Caco-2 (cell line): ENCODE measurements at regions of chrX and their contacts with region 1.

Region 1: GRCh38 chrX:111869639-111870034 is 6.3 kb upstream of the TRPC5OS start:
- DNase-seq: peak; percentile 34 to 36
- H3K4me3 ChIP-seq: no peak overlapping the region
- H3K4me3 Mint-ChIP-seq: no peak overlapping the region
- H3K27ac Mint-ChIP-seq: no peak overlapping the region
- H3K4me1 ChIP-seq: no peaks in the 10 kb centered on the region
- H3K4me1 Mint-ChIP-seq: no peaks in the 10 kb centered on the region
- H3K27me3 ChIP-seq: no peaks in the 10 kb centered on the region
- H3K27me3 Mint-ChIP-seq: no peaks in the 10 kb centered on the region
- CTCF ChIP-seq: peak; percentile 36 to 49

Region 2: GRCh38 chrX:111680988-111681779 is 188.5 kb before region 1 on chrX and contains the start of gene ALG13:
- CTCF ChIA-PET with region 1: no interaction called
- POLR2A ChIA-PET with region 1: interaction called, 10 read pairs
- intact Hi-C with region 1: no loop called
- DNase-seq: peak; percentile 86
- H3K4me3 ChIP-seq: peak within 1 kb of the TSS; percentile 92
- H3K4me3 Mint-ChIP-seq: peak within 1 kb of the TSS; percentile 96
- H3K27ac Mint-ChIP-seq: peak within 1 kb of the TSS; percentile 99
- H3K4me1 ChIP-seq: no peaks in the 10 kb centered on the region
- H3K4me1 Mint-ChIP-seq: no peaks in the 10 kb centered on the region
- H3K27me3 ChIP-seq: no peaks in the 10 kb centered on the region
- H3K27me3 Mint-ChIP-seq: no peaks in the 10 kb centered on the region
- CTCF ChIP-seq: peak; percentile 67 to 78
- total RNA-seq, gene ALG13: 36.3 and 40.3 TPM in 2 replicates

Region 3: GRCh38 chrX:111892375-111892774 is 22.7 kb after region 1 on chrX:
- CTCF ChIA-PET with region 1: no interaction called
- POLR2A ChIA-PET with region 1: no interaction called
- intact Hi-C with region 1: no loop called
- DNase-seq: no peak
- H3K4me3 ChIP-seq: no peak overlapping the region
- H3K4me3 Mint-ChIP-seq: no peak overlapping the region
- H3K27ac Mint-ChIP-seq: no peak overlapping the region
- H3K4me1 ChIP-seq: no peaks in the 10 kb centered on the region
- H3K4me1 Mint-ChIP-seq: no peaks in the 10 kb centered on the region
- H3K27me3 ChIP-seq: no peaks in the 10 kb centered on the region
- H3K27me3 Mint-ChIP-seq: no peaks in the 10 kb centered on the region
- CTCF ChIP-seq: no peak

Region 4: DNA sequence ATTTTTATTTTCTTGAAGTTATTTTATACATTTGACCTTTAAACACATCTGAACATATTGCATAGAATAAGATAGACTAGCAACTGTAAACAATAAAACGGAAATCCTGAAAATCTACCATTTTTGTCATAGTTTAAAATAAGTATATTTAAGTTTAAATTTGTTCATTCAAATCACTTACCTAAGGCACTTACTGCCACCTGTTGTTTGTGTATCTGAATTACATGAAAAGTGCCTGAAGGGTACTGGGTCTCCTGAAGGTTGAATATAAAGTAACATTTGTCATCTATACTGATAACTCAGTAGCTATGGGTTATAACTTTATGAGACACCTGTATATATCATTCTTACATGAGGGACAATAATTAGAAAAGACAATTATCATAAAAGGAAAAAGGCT is 174.4 kb after region 1 on chrX:
- CTCF ChIA-PET with region 1: no interaction called
- POLR2A ChIA-PET with region 1: no interaction called
- intact Hi-C with region 1: loop called (anchors 1 kb)
- DNase-seq: peak in 1 of 2 experiments; percentile 0
- H3K4me3 ChIP-seq: no peak overlapping the region
- H3K4me3 Mint-ChIP-seq: no peak overlapping the region
- H3K27ac Mint-ChIP-seq: no peak overlapping the region
- H3K4me1 ChIP-seq: no peaks in the 10 kb centered on the region
- H3K4me1 Mint-ChIP-seq: no peaks in the 10 kb centered on the region
- H3K27me3 ChIP-seq: no peaks in the 10 kb centered on the region
- H3K27me3 Mint-ChIP-seq: peaks cover 9% of the 10 kb centered on the region
- CTCF ChIP-seq: peak; percentile 12 to 15

Region 5: DNA sequence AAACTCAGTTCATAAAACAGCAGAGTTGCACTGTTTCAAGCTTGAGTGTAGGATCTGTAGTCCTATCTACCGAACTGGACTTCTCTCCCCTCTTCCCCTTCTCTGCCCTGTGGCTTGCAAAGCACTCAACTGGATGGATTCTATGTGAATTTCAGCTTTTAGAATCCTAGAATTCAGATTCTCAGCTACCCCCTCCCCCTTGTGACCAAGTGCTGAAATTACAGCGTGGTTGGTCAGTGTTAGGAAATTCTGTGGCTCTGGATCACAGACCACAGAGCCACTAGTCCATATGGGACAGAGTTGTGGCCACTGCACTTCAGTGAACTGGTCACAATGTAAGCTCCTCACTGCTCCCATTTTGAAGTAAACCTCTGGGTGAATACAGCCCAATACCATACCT is 277.6 kb after region 1 on chrX:
- CTCF ChIA-PET with region 1: no interaction called
- POLR2A ChIA-PET with region 1: no interaction called
- intact Hi-C with region 1: loop called (anchors 1 kb)
- DNase-seq: peak in 1 of 2 experiments; percentile 10
- H3K4me3 ChIP-seq: no peak overlapping the region
- H3K4me3 Mint-ChIP-seq: no peak overlapping the region
- H3K27ac Mint-ChIP-seq: no peak overlapping the region
- H3K4me1 ChIP-seq: no peaks in the 10 kb centered on the region
- H3K4me1 Mint-ChIP-seq: no peaks in the 10 kb centered on the region
- H3K27me3 ChIP-seq: no peaks in the 10 kb centered on the region
- H3K27me3 Mint-ChIP-seq: peaks cover 6% of the 10 kb centered on the region
- CTCF ChIP-seq: peak; percentile 39 to 46

Region 6: GRCh38 chrX:112642349-112642748 is 772.7 kb after region 1 on chrX:
- CTCF ChIA-PET with region 1: no interaction called
- POLR2A ChIA-PET with region 1: no interaction called
- intact Hi-C with region 1: loop called (anchors 2 kb)
- DNase-seq: peak; percentile 26 to 31
- H3K4me3 ChIP-seq: no peak overlapping the region
- H3K4me3 Mint-ChIP-seq: no peak overlapping the region
- H3K27ac Mint-ChIP-seq: no peak overlapping the region
- H3K4me1 ChIP-seq: no peaks in the 10 kb centered on the region
- H3K4me1 Mint-ChIP-seq: no peaks in the 10 kb centered on the region
- H3K27me3 ChIP-seq: no peaks in the 10 kb centered on the region
- H3K27me3 Mint-ChIP-seq: peaks cover 9% of the 10 kb centered on the region
- CTCF ChIP-seq: peak; percentile 33 to 54